K562 (cell line): ENCODE measurements at regions of chr5 and their contacts with region 1.

Region 1: DNA sequence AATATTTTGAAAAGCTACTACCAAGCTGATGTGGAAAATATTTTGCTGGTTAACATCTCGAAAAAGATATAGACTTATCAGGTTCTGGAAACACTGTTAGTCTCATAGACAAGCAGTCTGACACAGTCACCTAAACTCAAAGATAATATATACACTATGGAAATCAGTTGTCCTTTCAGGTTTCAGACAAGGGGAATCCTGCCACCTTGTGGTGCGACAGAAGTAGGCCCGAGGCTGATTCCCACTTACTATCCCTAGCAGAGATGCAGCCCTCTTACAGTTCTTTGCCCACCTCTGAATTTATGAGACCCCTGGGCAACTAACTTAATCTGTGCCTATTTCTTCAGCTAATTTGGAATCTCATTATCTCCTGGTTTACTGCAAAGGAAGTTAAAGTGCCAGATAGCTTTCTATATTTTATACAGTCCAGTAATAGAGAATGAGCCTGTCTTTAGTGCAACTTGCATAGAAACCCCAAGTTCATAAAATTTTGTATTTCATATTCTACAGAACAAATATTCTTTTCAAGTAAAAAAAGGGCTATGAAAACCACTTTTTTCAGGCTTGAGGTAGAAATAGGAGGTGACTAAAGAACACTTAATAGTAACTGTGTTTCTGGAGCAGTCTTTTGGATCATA is 16.9 kb downstream of the RAD1 start:
- DNase-seq: peak; percentile 69 to 87 (median 73)
- ATAC-seq: peak; percentile 90
- H3K4me3 ChIP-seq: no peak overlapping the region
- H3K27ac ChIP-seq: no peak overlapping the region
- H3K4me1 ChIP-seq: peaks cover 6 to 18% of the 10 kb centered on the region in 2 experiments
- H3K27me3 ChIP-seq: no peaks in the 10 kb centered on the region
- CTCF ChIP-seq: peak; percentile 82 to 96 (median 93)
- EP300 ChIP-seq: no peak
- POLR2A ChIP-seq: no peak
- RAD21 ChIP-seq: peak; percentile 97 to 98

Region 2: DNA sequence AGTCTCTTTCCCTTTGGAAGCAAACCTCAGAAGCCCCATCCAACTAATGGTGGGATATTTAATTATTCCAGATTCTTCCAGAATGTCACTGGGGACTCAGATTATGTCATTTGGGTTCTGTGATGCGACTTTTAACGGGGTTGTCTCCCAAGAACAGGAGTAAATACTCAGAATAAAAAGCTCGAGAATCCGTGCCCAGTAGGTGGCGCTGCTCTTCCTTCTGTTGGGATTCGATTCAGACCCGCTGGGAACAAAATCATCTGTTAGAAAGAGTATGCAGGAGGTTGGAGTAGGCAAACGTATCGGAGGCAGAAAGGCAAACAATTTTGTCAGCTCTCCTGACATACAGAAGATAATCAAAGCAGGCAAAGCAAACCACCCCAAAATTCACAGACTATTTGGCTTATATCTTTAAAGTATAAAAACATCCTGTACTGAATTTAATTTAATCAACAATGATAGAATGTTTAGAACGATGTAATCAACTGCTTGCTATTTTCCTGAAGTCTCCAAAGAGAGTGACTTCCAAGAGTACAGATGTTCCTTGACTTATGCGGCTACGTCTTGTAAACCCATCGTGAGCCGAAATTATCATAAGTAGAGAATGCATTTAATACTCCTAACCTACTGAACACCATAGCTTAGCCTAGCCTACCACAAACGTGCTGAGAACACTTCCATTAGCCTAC is 412.1 kb before region 1 on chr5:
- CTCF ChIA-PET with region 1: interaction called, 20 read pairs
- POLR2A ChIA-PET with region 1: interaction called, 4 read pairs
- in situ Hi-C with region 1: loop called (anchors 10 kb)
- intact Hi-C with region 1: loop called (anchors 1 kb)
- DNase-seq: peak; percentile 73 to 89 (median 76)
- ATAC-seq: peak; percentile 87
- H3K4me3 ChIP-seq: no peak overlapping the region
- H3K27ac ChIP-seq: no peak overlapping the region
- H3K4me1 ChIP-seq: peaks cover 0 to 5% of the 10 kb centered on the region in 2 experiments; a peak in 2 of 5 replicates
- H3K27me3 ChIP-seq: peaks cover 14 to 25% of the 10 kb centered on the region in 2 experiments
- CTCF ChIP-seq: peak; percentile 83 to 98 (median 89)
- EP300 ChIP-seq: 0 out of 2 replicates have a peak, but pooled peaks have one; percentile 17
- POLR2A ChIP-seq: no peak
- RAD21 ChIP-seq: peak; percentile 92 to 93

Region 3: DNA sequence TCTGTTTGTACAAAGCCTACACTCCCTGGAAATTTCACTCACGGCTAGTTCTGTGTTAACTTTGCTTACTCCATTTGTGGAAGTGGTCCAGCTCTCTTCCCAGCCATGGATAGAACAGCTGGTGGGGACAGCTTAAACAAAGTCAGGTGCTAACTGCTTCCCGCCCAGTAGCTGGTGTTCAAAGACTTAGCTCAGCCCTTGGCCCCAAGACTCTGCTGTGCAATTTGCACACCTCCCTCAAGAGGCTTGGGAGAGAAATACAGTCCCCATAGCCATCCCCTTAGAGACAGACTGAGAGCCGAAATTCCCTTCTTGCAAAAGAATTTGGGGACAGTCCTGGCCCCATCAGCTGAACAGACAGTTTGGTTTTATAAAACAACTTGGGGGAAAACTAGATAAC is 316.0 kb before region 1 on chr5:
- CTCF ChIA-PET with region 1: no interaction called
- POLR2A ChIA-PET with region 1: no interaction called
- in situ Hi-C with region 1: no loop called
- intact Hi-C with region 1: loop called (anchors 2 kb)
- DNase-seq: peak in 2 of 4 experiments; percentile 43 to 44
- ATAC-seq: peak; percentile 83
- H3K4me3 ChIP-seq: no peak overlapping the region
- H3K27ac ChIP-seq: no peak overlapping the region
- H3K4me1 ChIP-seq: peaks cover 11 to 35% of the 10 kb centered on the region in 2 experiments
- H3K27me3 ChIP-seq: no peaks in the 10 kb centered on the region
- CTCF ChIP-seq: peak; percentile 37 to 54 (median 53); a peak in 4 of 6 replicates
- EP300 ChIP-seq: no peak
- POLR2A ChIP-seq: no peak
- RAD21 ChIP-seq: peak; percentile 15 to 33; a peak in 3 of 4 replicates

Region 4: GRCh38 chr5:34686762-34687268 is 211.6 kb before region 1 on chr5:
- CTCF ChIA-PET with region 1: no interaction called
- POLR2A ChIA-PET with region 1: no interaction called
- in situ Hi-C with region 1: no loop called
- intact Hi-C with region 1: loop called (anchors 2 kb)
- DNase-seq: peak; percentile 78 to 95 (median 83)
- ATAC-seq: peak; percentile 97
- H3K4me3 ChIP-seq: no peak overlapping the region
- H3K27ac ChIP-seq: peak overlapping the region; percentile 81
- H3K4me1 ChIP-seq: peaks cover 13 to 29% of the 10 kb centered on the region in 2 experiments; a peak in 4 of 5 replicates
- H3K27me3 ChIP-seq: no peaks in the 10 kb centered on the region
- CTCF ChIP-seq: peak; percentile 40 to 55 (median 54); a peak in 4 of 6 replicates
- EP300 ChIP-seq: peak; percentile 64
- POLR2A ChIP-seq: peak; percentile 51; the same call in 1 of the 2 replicates
- RAD21 ChIP-seq: peak; percentile 54 to 66

Region 5: DNA sequence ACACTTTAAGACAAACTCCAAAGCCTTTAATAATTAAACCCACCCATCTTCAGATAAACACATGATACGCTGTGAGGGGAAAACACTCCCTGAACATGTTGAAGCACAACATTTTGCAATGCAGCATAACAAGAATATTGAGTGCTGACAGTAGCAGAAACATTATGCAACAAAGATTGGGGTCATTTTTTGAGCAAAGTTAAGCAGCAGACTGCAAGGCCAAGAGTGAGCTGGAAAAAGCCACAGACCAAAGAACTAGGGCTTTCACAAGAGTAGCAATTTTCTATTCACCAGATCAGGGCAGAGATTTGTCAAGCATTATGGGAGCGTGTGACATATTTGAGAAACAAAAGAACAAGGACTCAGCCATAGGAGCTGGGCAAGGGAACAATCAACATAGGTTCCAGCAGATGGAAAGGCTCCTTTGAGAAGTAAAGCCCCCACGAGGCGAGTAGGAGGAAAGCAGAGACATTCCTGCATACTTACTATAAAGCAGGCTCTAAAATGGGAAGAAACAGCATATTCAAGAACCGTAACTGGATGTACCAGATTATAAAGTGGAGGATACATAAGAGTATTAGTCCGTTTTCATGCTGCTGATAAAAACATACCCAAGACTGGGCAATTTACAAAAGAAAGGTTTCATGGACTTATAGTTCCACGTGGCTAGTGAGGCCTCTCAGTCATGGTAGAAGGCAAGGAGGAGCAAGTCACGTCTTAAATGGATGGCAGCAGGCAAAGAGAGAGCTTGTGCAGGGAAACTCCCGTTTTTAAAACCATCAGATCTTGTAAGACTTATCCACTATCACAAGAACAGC is 64.2 kb before region 1 on chr5:
- CTCF ChIA-PET with region 1: no interaction called
- POLR2A ChIA-PET with region 1: no interaction called
- in situ Hi-C with region 1: no loop called
- intact Hi-C with region 1: loop called (anchors 5 kb)
- DNase-seq: no peak
- ATAC-seq: no peak
- H3K4me3 ChIP-seq: no peak overlapping the region
- H3K27ac ChIP-seq: no peak overlapping the region
- H3K4me1 ChIP-seq: peaks cover 0 to 7% of the 10 kb centered on the region in 2 experiments; a peak in 1 of 5 replicates
- H3K27me3 ChIP-seq: no peaks in the 10 kb centered on the region
- CTCF ChIP-seq: no peak
- EP300 ChIP-seq: no peak
- POLR2A ChIP-seq: no peak
- RAD21 ChIP-seq: no peak